WTC11 (cell line): ENCODE measurements at regions of chr11 and their contacts with region 1.

Region 1: GRCh38 chr11:131064373-131064991 is 148.2 kb upstream of the SNX19 start:
- DNase-seq: peak; percentile 91
- ATAC-seq: peak; percentile 96
- H3K4me3 Mint-ChIP-seq: no peak overlapping the region
- H3K27ac Mint-ChIP-seq: no peak overlapping the region
- H3K4me1 Mint-ChIP-seq: peaks cover 43% of the 10 kb centered on the region
- H3K27me3 Mint-ChIP-seq: 0 out of 2 replicates have a peak, but pooled peaks cover 3% of the 10 kb centered on the region
- CTCF ChIP-seq: peak; percentile 63

Region 2: DNA sequence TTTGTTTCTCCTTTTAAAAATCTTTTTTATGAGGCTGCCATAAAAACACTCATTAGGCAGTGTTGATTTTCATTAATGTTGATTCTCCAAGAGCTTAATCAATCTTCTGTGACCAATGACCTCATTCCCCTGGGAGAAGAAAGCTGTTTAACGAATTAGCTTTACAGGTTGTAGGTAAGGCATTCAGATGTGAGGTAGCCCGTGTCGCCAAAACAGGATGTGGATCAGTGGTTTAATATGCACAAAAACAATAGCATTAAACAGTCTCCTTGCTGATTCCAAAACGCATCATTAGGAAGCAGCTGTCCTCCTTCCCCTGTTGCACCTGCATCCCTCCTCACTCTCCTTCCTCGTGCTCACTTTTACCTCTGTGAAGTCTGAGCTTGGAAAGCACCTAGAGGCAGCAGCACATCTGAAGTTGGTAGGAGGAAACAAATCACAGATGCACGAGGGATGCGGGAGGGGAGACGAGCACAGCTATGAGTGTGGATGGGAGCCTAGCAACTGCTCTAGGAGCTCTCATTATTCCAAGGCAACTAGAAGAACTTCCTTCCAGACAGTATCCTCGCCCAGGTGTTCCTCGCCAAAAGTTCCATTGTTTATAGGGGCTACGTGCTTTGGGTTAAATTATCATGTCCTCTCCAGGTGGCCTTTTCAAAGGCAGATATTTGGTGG is 31.2 kb after region 1 on chr11:
- CTCF ChIA-PET with region 1: interaction called, 10 read pairs
- POLR2A ChIA-PET with region 1: no interaction called
- DNase-seq: no peak
- ATAC-seq: peak; percentile 47
- H3K4me3 Mint-ChIP-seq: no peak overlapping the region
- H3K27ac Mint-ChIP-seq: no peak overlapping the region
- H3K4me1 Mint-ChIP-seq: peaks cover 14% of the 10 kb centered on the region
- H3K27me3 Mint-ChIP-seq: no peaks in the 10 kb centered on the region; the same call in 1 of the 2 replicates
- CTCF ChIP-seq: no peak

Region 3: DNA sequence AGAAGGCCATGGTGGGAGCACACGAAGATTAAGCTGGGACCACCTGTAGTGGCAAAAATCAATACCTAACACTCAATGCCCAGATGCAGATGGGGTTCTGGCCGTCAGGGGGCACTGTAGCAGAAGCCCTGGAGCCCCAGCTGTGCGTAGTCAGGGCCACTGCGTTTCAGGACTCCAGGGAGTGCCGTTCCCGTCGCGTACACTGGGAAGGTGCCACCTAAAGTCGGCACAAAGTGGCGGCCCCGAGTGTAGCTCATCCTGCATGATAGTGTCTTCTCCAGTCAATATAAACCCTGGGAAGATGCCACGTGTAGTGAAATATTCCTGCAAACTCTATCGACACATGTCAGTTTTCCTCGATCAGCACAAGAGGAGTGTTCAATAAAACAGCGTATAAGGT is 182.2 kb after region 1 on chr11:
- CTCF ChIA-PET with region 1: interaction called, 34 read pairs
- POLR2A ChIA-PET with region 1: no interaction called
- DNase-seq: peak; percentile 82
- ATAC-seq: peak; percentile 91
- H3K4me3 Mint-ChIP-seq: peak overlapping the region; percentile 53
- H3K27ac Mint-ChIP-seq: no peak overlapping the region
- H3K4me1 Mint-ChIP-seq: peaks cover 48% of the 10 kb centered on the region
- H3K27me3 Mint-ChIP-seq: peaks cover 12% of the 10 kb centered on the region
- CTCF ChIP-seq: peak; percentile 73

Region 4: DNA sequence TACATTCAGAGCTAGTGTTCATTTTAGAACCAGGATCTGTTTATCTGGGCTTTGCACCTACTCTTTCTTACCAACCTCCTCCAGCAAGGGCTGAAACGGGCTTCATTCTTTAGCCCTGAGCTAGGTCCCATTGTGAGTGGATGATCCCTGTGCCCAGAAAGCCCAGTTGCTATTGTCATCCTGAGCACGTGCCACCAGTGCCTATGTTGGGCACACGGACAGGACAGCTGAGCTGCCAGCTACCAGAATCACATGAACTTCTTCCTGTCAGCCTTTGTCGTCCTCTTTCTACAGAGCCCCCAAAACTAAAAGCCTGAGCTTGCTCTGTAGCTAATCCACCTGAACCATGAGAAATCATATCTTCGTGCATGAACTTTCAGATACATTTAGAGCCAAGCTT is 231.5 kb after region 1 on chr11:
- CTCF ChIA-PET with region 1: interaction called, 15 read pairs
- POLR2A ChIA-PET with region 1: no interaction called
- DNase-seq: no peak
- ATAC-seq: no peak
- H3K4me3 Mint-ChIP-seq: no peak overlapping the region
- H3K27ac Mint-ChIP-seq: no peak overlapping the region
- H3K4me1 Mint-ChIP-seq: peaks cover 61% of the 10 kb centered on the region
- H3K27me3 Mint-ChIP-seq: no peaks in the 10 kb centered on the region
- CTCF ChIP-seq: no peak

Region 5: DNA sequence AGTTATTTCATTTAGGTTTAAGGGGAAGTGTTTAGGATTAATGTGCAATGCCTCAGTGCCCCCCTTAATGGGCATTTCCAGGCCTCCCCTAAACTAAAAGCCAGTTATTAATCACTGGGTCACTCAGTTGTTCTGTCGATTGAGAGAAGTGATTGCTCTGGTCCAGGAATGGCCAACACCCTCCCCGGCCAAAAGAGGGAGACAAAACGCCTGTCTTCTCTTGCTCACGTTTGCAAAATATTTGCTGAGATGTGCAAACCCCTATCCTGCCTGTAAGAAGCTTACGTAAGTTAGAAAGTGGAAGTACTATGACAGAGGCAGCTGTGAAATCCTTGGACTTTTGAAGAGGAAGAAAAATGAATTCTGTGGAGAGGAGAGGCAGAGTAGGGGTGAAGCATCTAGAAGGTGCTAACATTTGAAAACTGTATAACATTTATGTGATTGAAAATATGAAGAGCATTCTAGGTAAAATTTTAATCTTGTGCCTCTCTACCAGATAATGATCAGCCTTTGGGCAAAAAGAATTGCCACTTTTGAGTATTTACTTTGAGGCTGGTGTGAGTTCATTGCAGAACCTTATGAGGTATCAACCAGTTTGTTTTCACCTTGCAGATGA is 343.7 kb after region 1 on chr11:
- CTCF ChIA-PET with region 1: interaction called, 10 read pairs
- POLR2A ChIA-PET with region 1: no interaction called
- DNase-seq: peak; percentile 55
- ATAC-seq: peak; percentile 83
- H3K4me3 Mint-ChIP-seq: no peak overlapping the region
- H3K27ac Mint-ChIP-seq: no peak overlapping the region
- H3K4me1 Mint-ChIP-seq: peaks cover 14% of the 10 kb centered on the region
- H3K27me3 Mint-ChIP-seq: no peaks in the 10 kb centered on the region
- CTCF ChIP-seq: peak; percentile 24; the same call in 1 of the 2 replicates

Region 6: DNA sequence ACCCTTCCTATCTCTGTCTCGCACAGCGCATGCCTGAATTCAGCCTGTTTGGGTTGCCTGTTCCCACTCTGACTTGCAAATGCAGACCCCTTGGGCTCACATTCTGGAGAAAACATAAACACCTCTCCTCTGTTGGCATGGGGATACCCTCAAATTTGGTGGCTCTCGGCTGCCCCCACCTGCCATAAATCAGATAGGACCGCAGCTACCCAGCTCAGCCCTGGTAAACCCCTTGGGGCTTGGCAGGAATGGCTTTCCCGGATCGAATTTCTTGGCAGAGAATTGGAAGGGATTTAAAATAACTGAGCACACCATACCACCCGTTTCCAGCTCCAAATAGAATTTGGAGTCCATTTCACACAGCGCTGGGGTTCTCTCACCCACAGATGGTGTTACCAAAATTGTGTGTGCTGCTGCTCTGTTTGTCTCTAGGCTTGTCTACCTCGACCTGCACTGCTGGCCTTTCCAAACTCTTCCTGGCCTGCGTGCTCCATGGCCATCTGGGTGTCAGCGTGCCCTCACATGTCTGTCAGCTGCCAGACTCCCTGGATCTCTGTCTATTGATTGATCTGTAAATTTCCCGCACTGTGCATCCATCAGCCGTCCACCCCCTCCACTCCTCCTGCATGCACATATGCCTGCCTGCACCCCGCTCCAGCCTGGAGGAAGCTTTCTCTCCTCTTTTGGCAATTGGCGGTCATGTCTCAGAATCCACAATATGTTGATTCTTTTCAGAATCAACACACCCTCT is 439.9 kb after region 1 on chr11:
- CTCF ChIA-PET with region 1: interaction called, 39 read pairs
- POLR2A ChIA-PET with region 1: no interaction called
- DNase-seq: peak; percentile 78
- ATAC-seq: peak; percentile 99
- H3K4me3 Mint-ChIP-seq: no peak overlapping the region
- H3K27ac Mint-ChIP-seq: 0 out of 2 replicates have a peak overlapping the region, but pooled peaks have one; percentile 26
- H3K4me1 Mint-ChIP-seq: peaks cover 18% of the 10 kb centered on the region
- H3K27me3 Mint-ChIP-seq: no peaks in the 10 kb centered on the region
- CTCF ChIP-seq: peak; percentile 36

Region 7: DNA sequence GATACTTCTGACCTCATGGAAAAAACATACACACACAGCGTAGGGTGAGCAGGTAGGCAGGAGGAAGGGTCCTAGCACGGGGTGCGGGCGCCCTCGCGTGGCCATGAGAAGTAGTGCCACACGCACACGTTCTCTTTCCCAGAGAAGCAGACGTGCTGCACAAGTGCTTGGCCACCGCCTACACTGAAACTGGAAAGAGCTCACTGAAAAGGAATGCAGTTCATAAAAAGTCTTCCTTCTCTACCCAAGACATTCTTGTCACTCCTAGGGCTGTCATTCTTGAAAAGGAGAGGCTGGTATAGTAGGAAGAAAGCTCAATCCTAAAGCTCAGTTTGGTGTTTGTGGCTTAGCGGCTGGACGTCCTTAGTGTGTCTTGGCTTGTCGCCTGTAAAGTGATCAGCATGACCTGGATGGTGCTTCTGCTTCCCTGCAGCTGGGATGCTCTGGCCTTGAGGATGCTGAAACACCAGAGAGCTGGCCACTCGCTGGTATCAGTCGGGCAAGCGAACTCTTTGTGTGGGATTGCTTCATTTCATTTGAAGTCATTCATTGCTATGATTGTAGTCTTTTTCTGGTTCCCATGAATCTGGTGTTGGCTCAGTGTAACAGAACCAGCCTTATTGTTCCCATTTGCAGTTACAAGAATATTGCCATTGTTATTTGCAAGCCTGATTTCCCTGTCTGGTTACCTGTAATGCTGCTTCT is 609.7 kb after region 1 on chr11:
- CTCF ChIA-PET with region 1: interaction called, 22 read pairs
- POLR2A ChIA-PET with region 1: no interaction called
- DNase-seq: peak; percentile 86
- ATAC-seq: peak; percentile 62
- H3K4me3 Mint-ChIP-seq: no peak overlapping the region
- H3K27ac Mint-ChIP-seq: no peak overlapping the region
- H3K4me1 Mint-ChIP-seq: peaks cover 32% of the 10 kb centered on the region
- H3K27me3 Mint-ChIP-seq: no peaks in the 10 kb centered on the region; the same call in 1 of the 2 replicates
- CTCF ChIP-seq: peak; percentile 98